HCT116 (cell line): ENCODE measurements at regions of chr7 and their contacts with region 1.

Region 1: GRCh38 chr7:2567679-2568278 is 9.0 kb downstream of the IQCE start:
- DNase-seq: no peak
- ATAC-seq: peak; percentile 43; the same call in 1 of the 2 replicates
- H3K4me3 ChIP-seq: no peak overlapping the region
- H3K27ac ChIP-seq: no peak overlapping the region
- H3K4me1 ChIP-seq: peaks cover 16 to 20% of the 10 kb centered on the region in 2 experiments
- H3K27me3 ChIP-seq: no peaks in the 10 kb centered on the region
- CTCF ChIP-seq: peak; percentile 22 to 38 (median 24); a peak in 3 of 6 replicates
- POLR2A ChIP-seq: no peak
- RAD21 ChIP-seq: peak; percentile 60

Region 2: GRCh38 chr7:2680792-2681490 is 113.2 kb after region 1 on chr7:
- CTCF ChIA-PET with region 1: interaction called, 3 read pairs
- POLR2A ChIA-PET with region 1: no interaction called
- RAD21 ChIA-PET with region 1: interaction called in 1 of 2 experiments, 3 read pairs
- intact Hi-C with region 1: loop called (anchors 10 kb)
- DNase-seq: peak; percentile 56
- ATAC-seq: peak; percentile 96
- H3K4me3 ChIP-seq: no peak overlapping the region
- H3K27ac ChIP-seq: no peak overlapping the region; the same call in 1 of the 2 replicates
- H3K4me1 ChIP-seq: peaks cover 0 to 4% of the 10 kb centered on the region in 2 experiments; a peak in 1 of 4 replicates
- H3K27me3 ChIP-seq: no peaks in the 10 kb centered on the region
- CTCF ChIP-seq: peak; percentile 73 to 87 (median 81)
- POLR2A ChIP-seq: no peak
- RAD21 ChIP-seq: peak; percentile 87